Common myeloid progenitor, CD34-positive (primary cell): ENCODE measurements at regions of chr16 and their contacts with region 1.

Region 1: DNA sequence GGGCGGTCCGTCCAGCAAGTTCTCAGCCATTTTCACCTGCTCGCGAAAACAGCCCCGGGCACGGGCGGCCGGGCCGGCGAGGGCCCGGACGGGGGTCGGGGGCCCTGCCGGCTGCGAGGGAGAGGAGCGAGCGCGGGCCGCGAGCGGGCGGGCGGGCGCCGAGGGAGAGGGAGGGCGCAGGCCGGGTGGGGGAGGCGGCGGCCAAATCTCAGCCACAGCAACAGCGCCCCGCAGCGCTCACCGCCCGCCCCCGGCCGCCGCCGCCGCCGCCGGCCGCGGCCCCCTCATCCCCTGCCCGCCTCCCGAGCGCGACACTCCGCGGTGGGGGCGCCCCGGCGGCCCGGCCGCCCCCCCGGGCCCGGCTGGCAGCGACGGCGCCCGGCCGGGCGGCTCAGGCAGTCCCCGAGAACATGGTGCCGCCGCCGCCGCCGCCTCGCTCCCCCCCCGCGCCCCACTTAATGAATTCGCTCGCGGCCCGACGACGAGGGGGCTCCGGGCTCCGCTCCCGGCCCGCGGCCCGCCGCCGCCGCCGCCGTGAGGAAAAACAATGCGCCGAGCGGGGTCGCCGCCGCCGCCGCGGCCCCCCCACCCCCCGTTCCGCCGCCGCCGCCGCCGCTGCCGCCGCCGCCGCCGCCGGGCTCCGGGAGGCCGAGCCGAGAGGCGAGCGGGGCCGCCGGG is 487 bp downstream of the CREBBP start:
- DNase-seq: peak; percentile 59 to 76 (median 69)
- H3K4me3 ChIP-seq: peak overlapping the region; percentile 43 to 90 (median 74)
- H3K27ac ChIP-seq: peak overlapping the region in 1 of 2 experiments; percentile 58
- H3K4me1 ChIP-seq: peaks cover 9 to 30% (median 19%) of the 10 kb centered on the region in 4 experiments
- H3K27me3 ChIP-seq: peaks cover 0 to 7% (median 4%) of the 10 kb centered on the region in 5 experiments

Region 2: GRCh38 chr16:3857189-3858043 is 22.6 kb before region 1 on chr16:
- CTCF ChIA-PET with region 1: interaction called, 10 read pairs
- POLR2A ChIA-PET with region 1: no interaction called
- DNase-seq: peak in 1 of 3 donors; percentile 31
- H3K4me3 ChIP-seq: no peak overlapping the region
- H3K27ac ChIP-seq: no peak overlapping the region
- H3K4me1 ChIP-seq: peaks cover 7 to 44% (median 25%) of the 10 kb centered on the region in 4 experiments
- H3K27me3 ChIP-seq: no peaks in the 10 kb centered on the region

Region 3: DNA sequence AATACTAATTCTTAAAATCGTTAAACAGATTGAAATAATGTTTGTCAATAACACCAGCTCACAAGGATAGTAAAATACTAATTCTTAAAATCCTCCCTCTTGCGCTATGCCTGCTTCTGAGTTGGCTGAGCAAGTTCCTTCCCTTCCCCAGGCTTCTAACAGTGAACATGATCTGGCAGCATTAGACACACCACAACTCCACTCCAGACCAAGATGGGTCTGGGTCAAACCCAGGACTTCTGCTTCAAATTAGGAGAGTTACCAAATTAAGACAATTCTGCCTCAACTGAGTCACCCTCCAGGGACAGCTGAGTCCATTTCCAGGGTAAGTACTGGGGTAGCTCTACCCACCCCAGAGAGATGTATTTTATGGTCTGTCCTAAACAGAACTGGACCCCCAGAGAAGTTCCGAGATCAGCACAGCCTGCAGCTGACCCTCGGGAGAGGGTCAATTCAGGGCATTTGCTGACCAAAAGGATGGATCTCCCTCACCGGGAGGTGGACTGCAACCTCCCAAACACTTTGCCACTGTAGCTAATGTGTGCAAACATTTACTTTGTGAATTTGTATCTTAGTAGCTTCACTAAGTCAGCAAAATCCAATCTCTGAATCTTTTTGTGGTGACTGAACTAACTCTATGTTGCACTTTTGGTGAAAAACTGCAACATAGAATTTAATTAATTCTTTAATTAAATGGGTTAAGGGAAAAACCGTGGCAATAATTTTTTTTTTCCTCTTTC is 187.4 kb after region 1 on chr16:
- CTCF ChIA-PET with region 1: no interaction called
- POLR2A ChIA-PET with region 1: no interaction called
- DNase-seq: no peak
- H3K4me3 ChIP-seq: no peak overlapping the region
- H3K27ac ChIP-seq: no peak overlapping the region
- H3K4me1 ChIP-seq: no peaks in the 10 kb centered on the region
- H3K27me3 ChIP-seq: no peaks in the 10 kb centered on the region